ENCODE measurements at regions of chr2 and their contacts with region 1.

Region 1: GRCh38 chr2:129152514-129152913 is 827.0 kb upstream of the RAB6C start:
- DNase-seq: no peak
- H3K4me3 ChIP-seq: no peak overlapping the region
- CTCF ChIP-seq: no peak

Region 2: GRCh38 chr2:128894896-128895295 is 257.6 kb before region 1 on chr2:
- in situ Hi-C with region 1: no loop called
- DNase-seq: no peak
- H3K4me3 ChIP-seq: no peak overlapping the region
- CTCF ChIP-seq: no peak

Region 3: GRCh38 chr2:129087133-129087818 is 65.2 kb before region 1 on chr2:
- in situ Hi-C with region 1: no loop called
- DNase-seq: no peak
- H3K4me3 ChIP-seq: no peak overlapping the region
- CTCF ChIP-seq: no peak

Region 4: DNA sequence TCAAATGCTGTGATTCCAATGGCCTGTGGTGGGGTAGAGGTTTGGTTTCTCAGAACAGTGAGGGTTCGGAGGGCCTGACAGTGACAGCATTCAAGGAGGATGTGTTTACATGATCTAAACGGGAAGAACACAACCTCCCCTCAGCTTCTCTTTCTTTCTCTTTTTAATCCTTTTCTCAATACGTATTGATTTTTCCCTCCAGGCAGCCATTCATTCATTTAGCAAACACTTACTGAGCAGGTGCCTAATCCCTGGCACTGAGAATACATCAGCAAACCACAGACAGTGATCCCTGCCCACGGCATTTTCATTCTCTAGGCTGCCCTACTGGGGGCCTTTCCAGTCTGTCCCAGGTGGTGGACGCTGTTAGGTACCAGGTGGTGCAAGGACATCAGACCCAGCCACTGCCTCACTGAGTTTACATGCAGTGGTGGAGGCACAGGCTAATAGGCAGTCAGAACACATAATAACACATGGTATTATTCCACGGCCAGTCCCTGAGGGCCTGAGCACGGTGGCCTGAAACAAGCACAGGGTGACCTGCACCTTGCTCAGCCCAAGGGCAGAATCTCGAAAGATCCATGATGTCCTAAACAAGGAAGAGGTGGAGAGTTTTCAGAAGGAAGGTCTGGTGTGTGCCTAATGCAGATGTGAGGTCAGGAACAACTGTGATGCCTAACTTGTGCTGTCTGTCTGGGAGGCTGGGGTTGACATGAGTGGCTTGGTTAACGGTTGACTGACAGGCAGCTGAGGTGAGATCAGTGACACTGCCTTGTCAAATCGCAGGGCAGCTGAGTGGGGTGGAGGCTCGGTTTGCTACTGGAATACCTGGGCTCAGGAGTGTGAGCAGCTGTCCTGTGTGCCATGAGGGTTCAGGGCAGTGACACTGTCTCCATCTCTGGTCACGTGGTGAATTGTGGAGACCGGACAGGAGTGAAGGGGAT is 48.3 kb before region 1 on chr2:
- in situ Hi-C with region 1: no loop called
- DNase-seq: no peak
- H3K4me3 ChIP-seq: no peak overlapping the region
- CTCF ChIP-seq: no peak

Region 5: GRCh38 chr2:129212299-129212958 is 59.9 kb after region 1 on chr2:
- in situ Hi-C with region 1: loop called (anchors 10 kb)
- DNase-seq: no peak
- H3K4me3 ChIP-seq: no peak overlapping the region
- CTCF ChIP-seq: no peak

Region 6: GRCh38 chr2:129408570-129408969 is 256.1 kb after region 1 on chr2:
- in situ Hi-C with region 1: no loop called
- DNase-seq: no peak
- H3K4me3 ChIP-seq: no peak overlapping the region
- CTCF ChIP-seq: no peak

Measured in astrocyte of the cerebellum (primary cell).